ENCODE measurements at regions of chr9 and their contacts with region 1.

Region 1: GRCh38 chr9:1009101-1009707 is 32.7 kb downstream of the DMRT3 start:
- DNase-seq: peak; percentile 69 to 81 (median 79)
- H3K4me3 ChIP-seq: no peak overlapping the region
- H3K4me3 Mint-ChIP-seq: no peak overlapping the region
- H3K27ac ChIP-seq: no peak overlapping the region
- H3K27ac Mint-ChIP-seq: peak overlapping the region in 2 of 7 donors; percentile 38 to 71
- H3K4me1 ChIP-seq: peaks cover 33 to 41% of the 10 kb centered on the region in 2 donors
- H3K4me1 Mint-ChIP-seq: peaks cover 22% of the 10 kb centered on the region
- H3K27me3 ChIP-seq: peaks cover 0 to 1% of the 10 kb centered on the region in 2 donors
- H3K27me3 Mint-ChIP-seq: peaks cover 2 to 8% (median 2%) of the 10 kb centered on the region in 3 donors
- CTCF ChIP-seq: peak; percentile 99

Region 2: DNA sequence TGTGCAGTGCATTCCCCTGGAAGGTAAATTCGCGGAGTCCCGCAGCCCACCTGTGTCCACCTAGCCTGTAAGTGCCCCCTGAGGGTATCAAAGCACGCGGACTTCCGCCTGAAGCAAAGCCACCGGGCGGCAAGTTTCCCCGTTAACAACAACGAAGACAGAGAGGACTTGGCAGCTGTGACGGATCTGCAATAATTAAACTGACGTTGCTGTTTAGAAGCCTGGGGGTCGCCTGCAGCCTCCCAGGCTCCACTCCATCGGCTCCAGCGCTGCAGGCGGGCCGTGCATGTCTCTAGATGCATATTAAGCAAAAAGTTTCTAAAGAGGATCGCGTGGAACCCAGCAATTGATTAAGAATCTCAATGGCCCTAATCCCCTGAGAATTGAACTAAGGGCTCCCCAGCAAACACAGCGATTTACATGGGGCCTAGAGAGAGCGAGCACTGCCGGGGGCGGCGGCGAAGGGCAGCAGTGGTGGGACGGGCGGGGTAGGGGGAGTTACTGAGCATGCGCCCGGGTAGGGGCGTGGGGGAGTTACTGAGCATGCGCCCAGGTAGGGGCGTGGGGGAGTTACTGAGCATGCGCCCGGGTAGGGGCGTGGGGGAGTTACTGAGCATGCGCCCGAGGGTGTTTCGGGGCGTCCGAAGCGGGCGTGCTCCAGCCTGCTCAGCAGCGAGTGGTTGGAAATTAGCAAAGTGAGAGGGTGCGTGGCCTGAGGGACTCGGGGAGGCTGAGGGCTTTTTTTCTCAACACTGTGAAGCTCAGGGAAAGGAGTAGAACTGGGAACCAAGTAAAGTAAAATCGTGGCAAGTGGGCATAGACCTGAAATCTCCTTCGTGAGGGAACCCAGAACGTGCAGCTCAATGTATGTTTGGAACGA is 539.3 kb before region 1 on chr9:
- intact Hi-C with region 1: loop called in 1 of 2 experiments (anchors 10 kb)
- DNase-seq: peak; percentile 15 to 75 (median 67)
- H3K4me3 ChIP-seq: peak overlapping the region; percentile 49 to 81 (median 77)
- H3K4me3 Mint-ChIP-seq: peak overlapping the region; percentile 91 to 94
- H3K27ac ChIP-seq: peak overlapping the region; percentile 27 to 61
- H3K27ac Mint-ChIP-seq: peak overlapping the region; percentile 63 to 92 (median 78)
- H3K4me1 ChIP-seq: peaks cover 27 to 30% of the 10 kb centered on the region in 2 donors
- H3K4me1 Mint-ChIP-seq: peaks cover 37% of the 10 kb centered on the region
- H3K27me3 ChIP-seq: no peaks in the 10 kb centered on the region
- H3K27me3 Mint-ChIP-seq: peaks cover 0 to 2% (median 1%) of the 10 kb centered on the region in 3 donors
- CTCF ChIP-seq: no peak

Region 3: DNA sequence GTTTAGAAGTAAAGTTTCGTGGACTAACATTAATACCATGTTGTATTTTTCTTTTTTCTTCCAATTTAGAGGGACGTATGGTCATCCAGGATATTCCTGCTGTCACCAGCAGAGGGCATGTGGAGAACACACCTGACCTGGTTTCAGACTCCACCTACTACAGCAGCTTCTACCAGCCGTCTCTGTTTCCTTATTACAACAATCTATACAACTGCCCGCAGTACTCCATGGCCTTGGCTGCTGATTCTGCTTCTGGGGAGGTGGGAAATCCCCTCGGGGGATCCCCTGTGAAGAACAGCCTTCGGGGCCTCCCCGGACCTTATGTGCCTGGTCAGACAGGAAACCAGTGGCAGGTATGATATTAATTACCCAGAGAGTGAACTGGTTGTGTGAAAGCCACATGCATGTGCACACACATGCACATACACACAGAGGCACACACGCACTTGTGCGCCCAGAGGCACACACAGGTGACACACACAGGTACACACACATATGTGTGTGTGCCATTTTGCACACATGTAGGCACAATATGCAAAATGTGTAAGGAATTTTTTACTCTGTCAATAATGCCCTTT is 115.3 kb before region 1 on chr9:
- intact Hi-C with region 1: loop called (anchors 2 kb)
- DNase-seq: peak; percentile 63 to 81 (median 70)
- H3K4me3 ChIP-seq: peak overlapping the region in 1 of 3 experiments; percentile 31
- H3K4me3 Mint-ChIP-seq: peak overlapping the region; percentile 2 to 65
- H3K27ac ChIP-seq: no peak overlapping the region
- H3K27ac Mint-ChIP-seq: no peak overlapping the region
- H3K4me1 ChIP-seq: peaks cover 13 to 20% of the 10 kb centered on the region in 2 donors
- H3K4me1 Mint-ChIP-seq: peaks cover 17% of the 10 kb centered on the region
- H3K27me3 ChIP-seq: no peaks in the 10 kb centered on the region
- H3K27me3 Mint-ChIP-seq: peaks cover 3 to 9% (median 5%) of the 10 kb centered on the region in 3 donors
- CTCF ChIP-seq: peak; percentile 96

Region 4: DNA sequence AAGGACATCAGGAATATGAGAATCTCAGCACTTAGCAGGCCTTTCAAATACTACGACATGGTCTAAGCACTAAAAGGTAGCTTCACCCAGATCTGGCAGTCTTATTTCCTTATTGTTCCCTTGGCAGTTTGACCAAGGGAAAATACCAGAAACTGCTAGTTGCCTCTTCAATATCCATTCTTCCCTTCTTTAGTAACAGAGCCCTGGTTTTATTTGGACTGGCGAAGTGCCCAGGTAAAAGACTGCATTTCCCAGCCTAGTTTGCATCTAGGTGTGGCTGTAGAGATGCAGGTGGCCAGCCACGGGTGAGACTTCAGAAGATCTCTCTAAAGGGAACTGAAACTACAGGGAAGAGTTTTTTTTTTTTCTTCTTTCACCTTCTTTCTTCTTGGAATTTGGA is 62.5 kb after region 1 on chr9:
- intact Hi-C with region 1: no loop called
- DNase-seq: no peak
- H3K4me3 ChIP-seq: no peak overlapping the region
- H3K4me3 Mint-ChIP-seq: no peak overlapping the region
- H3K27ac ChIP-seq: no peak overlapping the region
- H3K27ac Mint-ChIP-seq: no peak overlapping the region
- H3K4me1 ChIP-seq: no peaks in the 10 kb centered on the region
- H3K4me1 Mint-ChIP-seq: no peaks in the 10 kb centered on the region
- H3K27me3 ChIP-seq: peaks cover 0 to 4% of the 10 kb centered on the region in 2 donors
- H3K27me3 Mint-ChIP-seq: peaks cover 9 to 16% (median 9%) of the 10 kb centered on the region in 3 donors
- CTCF ChIP-seq: no peak